Gastrocnemius medialis (tissue), 4 donors: ENCODE measurements at regions of chr3 and their contacts with region 1.

Region 1: DNA sequence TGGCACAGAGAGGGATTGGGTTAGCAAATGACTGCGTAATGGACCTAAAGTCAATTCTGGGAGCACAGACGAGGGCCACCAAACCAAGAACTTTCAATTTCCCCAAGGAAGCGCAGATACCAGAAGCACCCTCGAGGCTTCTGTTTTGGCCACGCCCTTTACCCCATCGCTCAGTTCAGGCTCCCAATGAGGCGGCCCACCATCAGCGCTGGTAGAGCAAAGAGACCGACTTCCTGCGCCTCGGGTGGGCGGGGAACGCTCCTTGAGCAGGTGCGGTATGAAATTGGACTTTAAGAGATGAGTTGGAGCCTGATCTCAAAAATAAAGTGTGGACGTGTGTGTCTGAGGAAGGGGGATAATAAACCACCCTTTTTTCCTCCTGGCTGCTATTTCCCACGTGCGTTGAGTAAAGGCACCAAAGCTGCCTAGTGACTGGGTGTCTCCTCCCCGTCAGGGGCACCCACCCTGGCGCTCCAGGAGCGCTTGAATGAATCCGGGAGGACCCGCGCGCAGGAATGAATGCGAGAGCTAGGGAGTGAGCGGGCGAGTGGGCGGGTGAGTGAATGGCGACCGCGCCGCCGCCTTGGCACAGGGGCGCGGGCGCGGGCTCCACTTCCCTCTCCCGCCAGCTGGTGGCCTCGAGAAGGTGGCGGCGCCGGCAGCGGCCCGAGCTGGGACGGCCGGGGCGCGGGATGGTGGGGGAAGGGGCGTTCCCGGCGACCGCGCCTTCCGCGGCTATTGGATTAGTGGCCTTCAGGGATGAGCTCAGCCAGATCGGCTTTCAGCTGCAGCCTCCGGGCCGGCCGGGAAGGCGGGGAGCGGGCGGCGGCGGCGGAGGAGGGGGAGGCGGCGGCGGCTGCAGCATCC is at the start of gene SPSB4:
- DNase-seq: peak; percentile 61 to 72
- ATAC-seq: peak; percentile 82 to 89
- H3K4me3 ChIP-seq: peak within 1 kb of the TSS; percentile 57 to 68 (median 64)
- H3K27ac ChIP-seq: peak within 1 kb of the TSS in 2 of 4 donors; percentile 65 to 74
- H3K4me1 ChIP-seq: peaks cover 7 to 15% of the 10 kb centered on the region in 2 donors
- H3K27me3 ChIP-seq: peaks cover 0 to 13% (median 0%) of the 10 kb centered on the region in 3 donors
- CTCF ChIP-seq: peak; percentile 32 to 67 (median 59)
- POLR2A ChIP-seq: peak in 1 of 2 donors; percentile 55
- total RNA-seq, gene SPSB4: 0.35 to 0.81 TPM in 2 of 4 donors, not detected in the others

Region 2: DNA sequence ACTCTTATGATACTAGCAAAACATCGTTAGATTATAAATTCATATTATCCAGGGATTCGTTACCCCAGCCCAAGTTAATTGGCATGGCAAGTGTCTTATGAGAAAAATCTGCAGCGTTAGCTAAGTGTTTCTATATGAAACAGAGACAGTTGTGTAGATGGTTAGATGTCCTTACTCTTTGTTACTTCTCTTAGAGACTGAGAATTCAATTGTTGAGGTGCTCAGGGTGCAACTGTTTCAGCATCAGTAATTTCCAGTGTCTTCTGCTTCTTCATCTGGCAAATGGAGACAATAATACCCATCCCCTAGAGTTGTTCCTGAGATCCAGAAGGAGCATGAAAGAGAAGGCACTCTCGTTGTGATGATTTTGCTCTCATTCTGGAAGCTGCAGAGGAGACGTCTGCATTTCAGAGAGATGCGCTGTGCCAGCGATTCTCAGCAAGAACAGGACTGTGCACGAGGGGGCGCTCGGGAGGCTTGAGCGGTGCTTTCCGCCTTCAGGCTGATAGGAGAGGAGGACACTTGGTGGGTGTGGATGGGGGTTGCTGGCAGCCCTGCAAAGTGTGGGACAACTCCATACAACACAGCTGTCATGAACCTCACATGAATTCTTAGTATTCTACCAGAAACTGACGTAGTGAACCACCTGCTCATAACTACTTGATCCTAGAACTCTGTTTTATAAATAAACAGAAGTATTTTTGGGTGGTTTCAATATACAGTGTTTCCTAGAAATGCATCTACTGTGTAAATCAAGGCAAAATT is 39.4 kb before region 1 on chr3:
- in situ Hi-C with region 1: no loop called
- intact Hi-C with region 1: loop called (anchors 5 kb)
- DNase-seq: peak; percentile 31 to 63
- ATAC-seq: peak; percentile 58 to 75
- H3K4me3 ChIP-seq: no peak overlapping the region
- H3K27ac ChIP-seq: no peak overlapping the region
- H3K4me1 ChIP-seq: peaks cover 0 to 2% of the 10 kb centered on the region in 2 donors
- H3K27me3 ChIP-seq: no peaks in the 10 kb centered on the region
- CTCF ChIP-seq: peak; percentile 55 to 84 (median 69)
- POLR2A ChIP-seq: no peak

Region 3: DNA sequence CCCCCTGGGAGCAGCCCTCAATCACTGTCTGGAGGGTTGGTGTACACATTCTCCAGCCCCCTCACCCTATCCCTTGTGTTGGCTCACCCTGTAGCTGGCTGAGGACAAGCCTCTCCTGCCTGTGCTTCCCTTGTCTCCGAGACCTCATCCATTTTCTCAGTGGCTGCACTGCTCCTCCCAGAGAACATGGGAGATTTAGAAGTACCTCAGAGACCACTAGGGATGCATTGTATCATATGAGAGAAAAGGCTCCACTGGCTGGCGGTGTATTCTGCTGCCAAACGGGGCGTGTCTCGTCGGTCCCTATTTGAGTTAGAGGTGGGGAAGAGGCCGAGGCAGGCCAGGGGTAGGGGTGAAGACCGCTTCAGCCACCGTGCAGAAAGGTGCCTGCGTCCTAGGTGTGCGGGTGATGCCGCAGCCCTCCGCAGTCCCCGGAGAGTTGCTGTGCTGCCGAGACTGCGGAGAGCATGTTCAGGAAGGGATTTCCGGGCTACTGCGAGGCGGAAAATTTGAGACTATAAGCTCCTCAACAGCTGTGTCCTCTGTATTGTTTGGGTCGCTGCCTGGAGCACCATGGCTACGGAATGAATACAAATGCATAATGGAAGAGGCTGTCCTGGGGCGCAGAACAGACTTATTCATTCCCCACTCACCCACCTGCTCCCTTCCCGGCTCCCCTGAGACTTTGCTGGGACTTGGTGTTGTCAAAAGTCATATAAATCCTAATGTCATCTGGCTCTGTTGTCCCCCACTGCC is 44.2 kb after region 1 on chr3:
- in situ Hi-C with region 1: no loop called
- intact Hi-C with region 1: loop called (anchors 1 kb)
- DNase-seq: peak; percentile 47 to 72
- ATAC-seq: peak; percentile 81 to 82
- H3K4me3 ChIP-seq: peak overlapping the region; percentile 35 to 46 (median 42)
- H3K27ac ChIP-seq: peak overlapping the region in 3 of 4 donors; percentile 54 to 70 (median 65)
- H3K4me1 ChIP-seq: peaks cover 18 to 45% of the 10 kb centered on the region in 2 donors
- H3K27me3 ChIP-seq: no peaks in the 10 kb centered on the region
- CTCF ChIP-seq: no peak
- POLR2A ChIP-seq: no peak